Left ventricle myocardium superior (tissue), 1 donor: ENCODE measurements at regions of chr4 and their contacts with region 1.

Region 1: DNA sequence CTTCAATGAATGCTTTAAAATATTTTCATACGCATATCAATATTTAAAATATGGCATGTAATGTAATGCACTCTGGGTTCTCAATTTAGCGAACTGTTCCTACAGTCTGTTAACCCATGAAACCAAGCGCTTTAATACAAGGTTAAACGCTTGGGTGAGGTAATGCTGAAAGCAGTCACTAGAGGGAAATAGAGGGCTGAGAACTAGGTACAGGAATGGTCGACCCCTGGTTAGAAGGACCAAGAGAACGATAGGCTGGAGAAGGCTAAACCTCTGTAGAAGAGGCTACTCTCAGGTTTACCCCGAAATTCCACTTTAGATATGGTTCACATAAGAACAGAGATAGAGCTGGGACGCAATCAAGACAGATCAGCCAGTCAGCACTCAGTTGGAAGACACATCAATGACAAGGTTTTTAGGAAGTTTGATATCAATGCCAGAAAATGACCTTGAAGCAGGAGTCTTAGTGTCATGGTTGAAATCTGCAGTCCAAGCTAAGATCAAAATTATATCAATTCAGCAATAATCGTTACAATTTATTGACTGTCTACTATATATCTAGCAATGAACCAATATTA is 26.9 kb downstream of the ARSJ start:
- DNase-seq: no peak
- ATAC-seq: peak; percentile 72

Region 2: GRCh38 chr4:113761620-113762185 is 190.8 kb before region 1 on chr4 and contains the start of gene CAMK2D:
- intact Hi-C with region 1: loop called (anchors 10 kb)
- DNase-seq: peak; percentile 91
- ATAC-seq: peak; percentile 84
- total RNA-seq, gene CAMK2D: 232 TPM